ENCODE measurements at regions of chr1 and their contacts with region 1.

Region 1: GRCh38 chr1:234309598-234310459 is 63.4 kb upstream of the COA6 start:
- DNase-seq: peak; percentile 47 to 84
- H3K4me3 ChIP-seq: no peak overlapping the region
- H3K27ac ChIP-seq: no peak overlapping the region
- H3K4me1 ChIP-seq: peaks cover 0 to 5% (median 2%) of the 10 kb centered on the region in 4 experiments; a peak in 4 of 7 replicates
- H3K27me3 ChIP-seq: no peaks in the 10 kb centered on the region
- CTCF ChIP-seq: peak; percentile 87 to 92 (median 92)
- EP300 ChIP-seq: no peak
- POLR2A ChIP-seq: no peak
- RAD21 ChIP-seq: peak; percentile 79 to 85

Region 2: DNA sequence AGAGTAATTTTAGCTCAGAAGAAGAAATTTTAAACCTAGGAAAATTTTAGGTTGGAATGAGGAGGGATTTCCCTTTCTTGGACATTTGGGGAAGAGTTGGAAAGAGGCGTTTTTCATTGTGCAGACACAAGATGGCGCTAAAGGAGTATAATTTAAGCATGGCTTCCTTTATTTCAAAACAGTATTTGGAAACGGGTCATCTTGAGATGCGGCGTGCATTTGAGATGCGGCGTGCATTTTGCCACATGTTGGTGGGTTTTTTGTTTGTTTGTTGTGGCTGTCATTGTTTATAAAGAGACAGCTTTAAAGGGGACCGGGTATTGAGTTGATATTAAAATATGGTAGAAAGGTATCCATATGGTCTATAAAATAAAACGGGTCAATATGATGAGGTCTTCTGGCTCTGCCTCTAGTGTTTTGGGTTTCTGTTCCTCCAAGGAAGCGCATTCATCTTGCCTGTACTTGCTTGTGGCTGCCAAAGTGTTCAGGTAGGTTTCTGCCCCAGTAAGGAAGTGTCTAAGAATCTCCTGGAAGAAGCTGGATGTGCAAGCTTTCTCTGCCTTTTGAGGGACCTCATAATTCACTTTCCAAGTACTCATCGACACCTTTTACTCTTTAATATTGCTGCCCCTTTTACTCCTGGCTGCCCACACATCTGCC is 195.1 kb before region 1 on chr1:
- CTCF ChIA-PET with region 1: interaction called, 18 read pairs
- POLR2A ChIA-PET with region 1: no interaction called
- DNase-seq: no peak
- H3K4me3 ChIP-seq: no peak overlapping the region
- H3K27ac ChIP-seq: no peak overlapping the region
- H3K4me1 ChIP-seq: no peaks in the 10 kb centered on the region
- H3K27me3 ChIP-seq: no peaks in the 10 kb centered on the region
- CTCF ChIP-seq: peak in 2 of 3 experiments; percentile 55 to 63; a peak in 3 of 4 replicates
- EP300 ChIP-seq: no peak
- POLR2A ChIP-seq: no peak
- RAD21 ChIP-seq: peak; percentile 71 to 75

Region 3: GRCh38 chr1:234149217-234149616 is 160.6 kb before region 1 on chr1:
- CTCF ChIA-PET with region 1: interaction called, 11 read pairs
- POLR2A ChIA-PET with region 1: no interaction called
- DNase-seq: no peak
- H3K4me3 ChIP-seq: no peak overlapping the region
- H3K27ac ChIP-seq: no peak overlapping the region
- H3K4me1 ChIP-seq: peaks cover 0 to 4% (median 0%) of the 10 kb centered on the region in 4 experiments; a peak in 1 of 7 replicates
- H3K27me3 ChIP-seq: no peaks in the 10 kb centered on the region
- CTCF ChIP-seq: no peak
- EP300 ChIP-seq: no peak
- POLR2A ChIP-seq: no peak
- RAD21 ChIP-seq: no peak

Region 4: GRCh38 chr1:234212764-234213657 is 96.8 kb before region 1 on chr1:
- CTCF ChIA-PET with region 1: interaction called, 170 read pairs
- POLR2A ChIA-PET with region 1: interaction called, 5 read pairs
- DNase-seq: no peak
- H3K4me3 ChIP-seq: peak overlapping the region in 1 of 4 experiments; percentile 70; a peak in 1 of 8 replicates
- H3K27ac ChIP-seq: no peak overlapping the region
- H3K4me1 ChIP-seq: peaks cover 0 to 9% (median 6%) of the 10 kb centered on the region in 4 experiments; a peak in 4 of 7 replicates
- H3K27me3 ChIP-seq: peaks cover 0 to 15% (median 9%) of the 10 kb centered on the region in 4 experiments; a peak in 6 of 7 replicates
- CTCF ChIP-seq: peak in 2 of 3 experiments; percentile 81 to 84; a peak in 3 of 4 replicates
- EP300 ChIP-seq: no peak
- POLR2A ChIP-seq: no peak
- RAD21 ChIP-seq: peak; percentile 65 to 79; a peak in 3 of 4 replicates

Region 5: DNA sequence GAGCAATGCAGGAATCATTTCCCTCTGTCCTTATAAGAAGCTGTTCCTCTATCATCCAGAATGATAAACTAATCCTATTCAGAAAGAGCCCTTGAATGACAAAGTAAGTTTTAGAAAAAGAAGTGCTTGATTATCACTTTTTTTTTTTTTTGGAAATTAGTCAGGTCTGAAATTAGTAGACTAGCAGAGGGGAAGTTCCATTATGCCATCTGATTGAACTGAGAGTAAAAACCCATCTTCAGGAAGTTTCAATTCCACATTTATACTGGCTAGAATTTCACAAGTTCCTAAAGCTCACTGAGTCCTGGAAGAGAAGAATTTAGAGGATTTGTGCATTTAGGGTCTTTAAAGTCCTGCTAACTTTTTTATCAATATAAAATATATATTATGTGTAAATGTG is 65.3 kb before region 1 on chr1:
- CTCF ChIA-PET with region 1: interaction called, 17 read pairs
- POLR2A ChIA-PET with region 1: no interaction called
- DNase-seq: no peak
- H3K4me3 ChIP-seq: no peak overlapping the region
- H3K27ac ChIP-seq: no peak overlapping the region
- H3K4me1 ChIP-seq: no peaks in the 10 kb centered on the region
- H3K27me3 ChIP-seq: no peaks in the 10 kb centered on the region
- CTCF ChIP-seq: no peak
- EP300 ChIP-seq: no peak
- POLR2A ChIP-seq: no peak
- RAD21 ChIP-seq: no peak

Region 6: GRCh38 chr1:234288946-234289345 is 20.9 kb before region 1 on chr1:
- CTCF ChIA-PET with region 1: interaction called, 79 read pairs
- POLR2A ChIA-PET with region 1: no interaction called
- DNase-seq: no peak
- H3K4me3 ChIP-seq: no peak overlapping the region
- H3K27ac ChIP-seq: no peak overlapping the region
- H3K4me1 ChIP-seq: no peaks in the 10 kb centered on the region
- H3K27me3 ChIP-seq: no peaks in the 10 kb centered on the region
- CTCF ChIP-seq: no peak
- EP300 ChIP-seq: no peak
- POLR2A ChIP-seq: no peak
- RAD21 ChIP-seq: no peak